ENCODE measurements at regions of chr1 and their contacts with region 1.

Region 1: GRCh38 chr1:206544562-206545257 is 37.4 kb downstream of the RASSF5 start:
- DNase-seq: peak; percentile 81
- ATAC-seq: peak; percentile 93
- H3K4me3 Mint-ChIP-seq: no peak overlapping the region
- H3K27ac Mint-ChIP-seq: no peak overlapping the region
- H3K4me1 Mint-ChIP-seq: peaks cover 4% of the 10 kb centered on the region
- H3K27me3 Mint-ChIP-seq: no peaks in the 10 kb centered on the region
- CTCF ChIP-seq: peak; percentile 63

Region 2: GRCh38 chr1:205983925-205984725 is 560.6 kb before region 1 on chr1:
- CTCF ChIA-PET with region 1: no interaction called
- POLR2A ChIA-PET with region 1: interaction called, 19 read pairs
- intact Hi-C with region 1: no loop called
- DNase-seq: peak; percentile 39
- ATAC-seq: peak; percentile 93
- H3K4me3 Mint-ChIP-seq: no peak overlapping the region
- H3K27ac Mint-ChIP-seq: no peak overlapping the region
- H3K4me1 Mint-ChIP-seq: peaks cover 2% of the 10 kb centered on the region
- H3K27me3 Mint-ChIP-seq: no peaks in the 10 kb centered on the region
- CTCF ChIP-seq: no peak

Region 3: DNA sequence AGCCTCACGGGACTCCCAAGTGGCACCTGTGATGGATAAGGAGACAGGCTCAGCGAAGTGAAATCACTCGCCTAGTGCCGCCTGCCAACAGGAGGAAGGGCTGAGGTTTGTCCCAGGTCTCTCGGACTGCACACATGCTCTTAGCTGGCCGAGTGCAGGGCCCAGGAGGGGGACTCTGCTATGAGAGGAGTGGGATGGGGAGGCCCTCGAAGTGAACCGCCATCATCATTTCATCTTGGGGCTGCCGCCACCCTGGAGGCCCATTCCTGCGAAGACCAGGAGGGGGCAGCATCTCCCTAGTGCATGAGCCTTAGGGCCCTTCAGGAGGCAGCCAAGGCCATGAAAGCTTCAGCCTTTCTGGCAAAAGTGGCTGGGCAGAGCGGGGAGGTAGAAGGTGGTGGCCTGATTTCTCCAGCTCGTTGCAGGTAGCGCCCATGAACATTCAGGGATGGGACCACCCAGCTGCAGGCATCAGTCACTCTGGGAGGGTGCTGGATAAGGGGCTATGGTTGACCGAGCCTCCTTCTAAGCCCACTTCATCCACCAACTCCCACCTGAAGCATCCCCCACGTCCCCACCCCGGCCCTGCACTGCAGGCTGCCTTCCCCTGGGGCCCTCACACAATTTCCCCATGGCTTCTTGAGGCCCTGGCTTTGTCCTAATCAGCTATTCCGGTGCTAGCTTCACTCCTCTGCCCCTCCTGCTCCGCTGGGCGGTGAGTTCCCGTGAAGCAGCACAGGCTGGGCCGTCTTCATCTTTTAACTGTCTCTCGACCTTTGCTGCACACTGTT is 54.5 kb before region 1 on chr1:
- CTCF ChIA-PET with region 1: interaction called, 48 read pairs
- POLR2A ChIA-PET with region 1: no interaction called
- intact Hi-C with region 1: loop called (anchors 1 kb)
- DNase-seq: peak; percentile 66
- ATAC-seq: peak; percentile 95
- H3K4me3 Mint-ChIP-seq: no peak overlapping the region
- H3K27ac Mint-ChIP-seq: no peak overlapping the region
- H3K4me1 Mint-ChIP-seq: peaks cover 10% of the 10 kb centered on the region
- H3K27me3 Mint-ChIP-seq: no peaks in the 10 kb centered on the region
- CTCF ChIP-seq: no peak

Region 4: GRCh38 chr1:206556750-206557635 is 12.3 kb after region 1 on chr1:
- CTCF ChIA-PET with region 1: interaction called, 59 read pairs
- POLR2A ChIA-PET with region 1: interaction called, 23 read pairs
- intact Hi-C with region 1: loop called (anchors 1 kb)
- DNase-seq: peak; percentile 83
- ATAC-seq: peak; percentile 78
- H3K4me3 Mint-ChIP-seq: peak overlapping the region; percentile 96
- H3K27ac Mint-ChIP-seq: peak overlapping the region; percentile 96
- H3K4me1 Mint-ChIP-seq: peaks cover 71% of the 10 kb centered on the region
- H3K27me3 Mint-ChIP-seq: no peaks in the 10 kb centered on the region
- CTCF ChIP-seq: no peak

Region 5: DNA sequence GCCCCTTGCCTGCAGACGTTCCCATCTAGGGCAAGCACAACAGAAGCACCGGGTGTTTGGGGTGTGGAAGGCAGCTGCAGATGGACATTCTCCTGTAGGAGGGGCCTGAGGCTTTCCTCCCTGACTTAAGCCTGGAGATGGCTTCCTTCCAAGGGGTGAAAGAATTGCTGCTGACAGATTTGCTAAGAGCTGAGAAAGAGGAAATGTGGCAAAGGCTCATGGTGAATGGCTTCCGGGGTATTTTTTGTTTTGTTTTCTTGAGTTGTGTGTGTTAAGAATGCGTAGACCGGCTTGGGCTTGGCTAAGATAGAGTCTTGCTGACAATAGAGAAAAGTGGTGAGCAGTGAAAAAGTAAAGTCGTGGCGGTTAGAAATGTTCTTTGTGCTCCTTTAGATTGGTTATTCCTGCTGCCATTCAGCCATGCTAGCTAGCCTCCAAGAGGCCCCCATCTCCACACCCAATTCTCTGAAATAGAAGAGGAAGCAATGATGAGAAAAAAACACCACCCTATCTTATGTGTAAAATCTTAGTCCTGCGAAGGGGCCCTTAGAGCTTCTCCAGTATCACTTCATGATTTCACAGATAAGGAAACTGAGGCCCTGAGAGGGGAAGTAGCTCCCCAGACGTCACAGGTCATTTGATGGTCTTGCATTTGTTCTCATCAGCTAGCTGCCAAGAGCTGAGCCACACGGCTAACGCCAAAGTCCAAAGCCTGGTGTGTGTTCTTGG is 30.6 kb after region 1 on chr1:
- CTCF ChIA-PET with region 1: interaction called, 349 read pairs
- POLR2A ChIA-PET with region 1: interaction called, 75 read pairs
- intact Hi-C with region 1: no loop called
- DNase-seq: no peak
- ATAC-seq: peak; percentile 19
- H3K4me3 Mint-ChIP-seq: peak overlapping the region; percentile 73
- H3K27ac Mint-ChIP-seq: peak overlapping the region; percentile 96
- H3K4me1 Mint-ChIP-seq: peaks cover 98% of the 10 kb centered on the region
- H3K27me3 Mint-ChIP-seq: no peaks in the 10 kb centered on the region
- CTCF ChIP-seq: no peak

Region 6: GRCh38 chr1:208007938-208008342 is 1463.2 kb after region 1 on chr1:
- CTCF ChIA-PET with region 1: no interaction called
- POLR2A ChIA-PET with region 1: no interaction called
- intact Hi-C with region 1: no loop called
- DNase-seq: no peak
- ATAC-seq: no peak
- H3K4me3 Mint-ChIP-seq: no peak overlapping the region
- H3K27ac Mint-ChIP-seq: no peak overlapping the region
- H3K4me1 Mint-ChIP-seq: no peaks in the 10 kb centered on the region
- H3K27me3 Mint-ChIP-seq: no peaks in the 10 kb centered on the region
- CTCF ChIP-seq: no peak